MCF 10A (cell line): ENCODE measurements at regions of chr3 and their contacts with region 1.

Region 1: DNA sequence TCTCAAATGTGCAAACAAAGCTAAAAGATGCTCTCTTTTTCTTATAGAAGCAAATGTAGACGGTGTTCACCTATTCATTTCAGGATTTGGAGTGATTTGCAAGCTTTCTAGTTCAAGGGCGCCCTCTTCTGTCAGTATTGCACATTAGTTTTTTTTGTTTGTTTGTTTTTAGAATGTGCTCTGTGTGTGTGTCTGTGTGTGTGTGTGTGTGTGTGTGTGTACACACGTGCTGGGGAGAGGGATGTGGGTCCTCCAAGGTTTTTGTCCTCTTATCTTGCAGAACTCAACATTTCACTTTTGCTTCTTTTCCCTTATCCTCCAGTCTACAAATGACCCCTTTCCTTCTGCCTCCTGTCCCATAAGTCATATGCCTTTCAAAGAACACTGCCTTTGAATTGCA is 23.5 kb downstream of the DNAH1 start:
- DNase-seq: peak; percentile 83
- H3K4me3 Mint-ChIP-seq: no peak overlapping the region
- H3K27ac Mint-ChIP-seq: no peak overlapping the region
- H3K4me1 Mint-ChIP-seq: peaks cover 6% of the 10 kb centered on the region
- H3K27me3 Mint-ChIP-seq: peaks cover 7% of the 10 kb centered on the region
- CTCF ChIP-seq: peak; percentile 62

Region 2: GRCh38 chr3:52204337-52205073 is 135.1 kb before region 1 on chr3:
- CTCF ChIA-PET with region 1: interaction called, 13 read pairs
- POLR2A ChIA-PET with region 1: no interaction called
- intact Hi-C with region 1: no loop called
- DNase-seq: peak; percentile 92
- H3K4me3 Mint-ChIP-seq: no peak overlapping the region
- H3K27ac Mint-ChIP-seq: no peak overlapping the region
- H3K4me1 Mint-ChIP-seq: peaks cover 20% of the 10 kb centered on the region
- H3K27me3 Mint-ChIP-seq: no peaks in the 10 kb centered on the region
- CTCF ChIP-seq: no peak

Region 3: DNA sequence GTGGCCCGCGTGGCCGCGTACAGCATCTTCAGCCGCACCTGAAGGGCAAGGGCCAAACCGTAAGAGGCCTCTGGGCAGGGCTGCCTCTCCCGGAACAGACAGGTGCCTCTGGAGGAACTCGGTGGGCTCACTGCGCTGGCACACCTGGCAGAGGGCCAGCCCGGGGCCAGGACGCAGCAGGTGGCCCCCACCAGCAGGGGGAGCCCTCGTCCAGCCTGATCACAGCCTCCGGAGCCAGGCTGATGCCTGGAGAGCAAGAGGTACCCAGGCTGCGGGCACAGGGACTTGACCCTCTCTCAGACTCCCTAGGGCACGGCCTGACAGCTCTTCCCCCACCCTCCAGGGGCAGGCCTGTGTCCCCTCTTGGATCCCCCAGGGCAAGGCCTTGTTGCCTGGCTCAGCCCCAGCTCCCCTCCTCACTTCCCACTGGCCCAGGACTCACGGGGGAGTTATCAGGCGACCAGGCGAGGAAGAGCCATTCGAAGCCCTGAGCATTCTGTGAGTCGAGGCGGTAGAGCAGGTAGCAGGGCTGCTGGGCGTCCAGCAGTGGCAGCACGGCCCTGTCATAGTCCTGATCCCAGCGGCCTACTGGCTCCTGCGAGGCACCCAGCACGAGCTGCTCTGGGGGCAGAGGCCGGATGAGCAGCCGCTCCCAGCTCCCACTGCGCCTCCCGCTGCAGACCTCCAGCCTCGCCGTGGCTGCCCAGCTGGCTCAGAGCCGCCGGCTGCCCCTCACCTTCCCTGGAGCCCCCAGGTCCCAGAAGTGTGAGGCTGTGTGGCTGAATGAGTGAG is 107.9 kb before region 1 on chr3:
- CTCF ChIA-PET with region 1: interaction called, 52 read pairs
- POLR2A ChIA-PET with region 1: no interaction called
- intact Hi-C with region 1: loop called (anchors 1 kb)
- DNase-seq: peak; percentile 72
- H3K4me3 Mint-ChIP-seq: no peak overlapping the region
- H3K27ac Mint-ChIP-seq: no peak overlapping the region
- H3K4me1 Mint-ChIP-seq: peaks cover 2% of the 10 kb centered on the region
- H3K27me3 Mint-ChIP-seq: no peaks in the 10 kb centered on the region
- CTCF ChIP-seq: peak; percentile 96

Region 4: GRCh38 chr3:52278510-52279069 is 61.0 kb before region 1 on chr3 and contains the start of gene WDR82:
- CTCF ChIA-PET with region 1: interaction called, 5 read pairs
- POLR2A ChIA-PET with region 1: interaction called, 16 read pairs
- intact Hi-C with region 1: loop called (anchors 5 kb)
- DNase-seq: peak; percentile 90
- H3K4me3 Mint-ChIP-seq: peak within 1 kb of the TSS; percentile 84
- H3K27ac Mint-ChIP-seq: peak within 1 kb of the TSS; percentile 99
- H3K4me1 Mint-ChIP-seq: peaks cover 26% of the 10 kb centered on the region
- H3K27me3 Mint-ChIP-seq: no peaks in the 10 kb centered on the region
- CTCF ChIP-seq: peak; percentile 38
- total RNA-seq, gene WDR82: 60.7 and 62.5 TPM in 2 replicates

Region 5: GRCh38 chr3:52298149-52299098 is 41.2 kb before region 1 on chr3:
- CTCF ChIA-PET with region 1: interaction called, 10 read pairs
- POLR2A ChIA-PET with region 1: no interaction called
- intact Hi-C with region 1: loop called (anchors 5 kb)
- DNase-seq: no peak
- H3K4me3 Mint-ChIP-seq: no peak overlapping the region
- H3K27ac Mint-ChIP-seq: no peak overlapping the region
- H3K4me1 Mint-ChIP-seq: no peaks in the 10 kb centered on the region
- H3K27me3 Mint-ChIP-seq: no peaks in the 10 kb centered on the region
- CTCF ChIP-seq: no peak

Region 6: GRCh38 chr3:52328536-52329080 is 11.0 kb before region 1 on chr3:
- CTCF ChIA-PET with region 1: interaction called, 29 read pairs
- POLR2A ChIA-PET with region 1: interaction called, 3 read pairs
- intact Hi-C with region 1: no loop called
- DNase-seq: no peak
- H3K4me3 Mint-ChIP-seq: no peak overlapping the region
- H3K27ac Mint-ChIP-seq: no peak overlapping the region
- H3K4me1 Mint-ChIP-seq: no peaks in the 10 kb centered on the region
- H3K27me3 Mint-ChIP-seq: no peaks in the 10 kb centered on the region
- CTCF ChIP-seq: no peak